AG04449 (cell line): ENCODE measurements at regions of chr22 and their contacts with region 1.

Region 1: DNA sequence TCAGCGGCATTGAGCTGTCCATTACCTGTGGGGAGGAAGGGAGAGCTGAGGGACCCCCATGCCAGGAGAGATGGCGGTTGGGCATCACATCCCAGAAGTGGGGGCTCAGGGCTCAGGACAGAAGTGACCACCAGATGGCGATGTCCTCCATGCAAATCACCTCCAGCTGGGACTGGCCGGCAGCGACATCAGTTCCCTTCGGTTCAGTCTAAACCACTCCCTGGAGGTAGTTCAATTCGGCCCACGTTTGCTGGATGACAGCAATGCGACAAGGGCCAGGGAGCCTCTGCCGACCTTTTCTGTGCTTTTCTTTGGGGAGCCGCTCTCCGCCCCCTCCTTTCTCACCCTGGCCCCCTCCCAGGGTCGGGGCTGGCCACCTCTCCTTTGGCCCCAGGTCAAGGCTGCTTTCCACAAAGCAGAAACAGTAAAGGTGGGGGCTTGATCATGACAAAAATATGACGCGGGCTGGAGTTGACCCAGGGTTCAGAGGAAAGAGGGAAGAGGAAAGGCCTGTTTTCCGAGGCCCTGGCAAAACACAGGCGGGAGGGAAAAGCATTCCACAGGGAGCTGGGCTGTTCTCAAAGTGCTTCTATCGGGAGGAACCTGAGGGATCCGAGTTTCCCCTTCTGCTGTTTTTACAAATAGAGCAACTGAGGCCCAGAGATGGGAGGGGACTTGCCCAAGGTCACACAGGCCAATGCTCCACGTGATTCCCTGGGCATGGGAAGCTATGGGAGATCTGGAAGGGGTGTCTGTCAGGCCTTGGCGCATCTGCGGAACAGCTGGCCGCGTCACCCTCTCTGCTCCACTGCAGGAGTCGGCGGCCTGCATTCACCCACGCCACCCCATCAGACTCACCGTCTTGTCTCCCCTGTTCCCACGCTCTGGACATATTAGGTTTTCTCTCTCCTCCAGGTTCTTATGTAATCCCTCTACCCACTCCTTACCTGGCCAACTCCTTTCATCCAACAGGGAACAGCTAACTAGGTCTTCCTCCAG is 54.7 kb downstream of the FBXO7 start:
- DNase-seq: peak; percentile 45
- H3K4me3 ChIP-seq: no peak overlapping the region
- CTCF ChIP-seq: peak; percentile 89

Region 2: DNA sequence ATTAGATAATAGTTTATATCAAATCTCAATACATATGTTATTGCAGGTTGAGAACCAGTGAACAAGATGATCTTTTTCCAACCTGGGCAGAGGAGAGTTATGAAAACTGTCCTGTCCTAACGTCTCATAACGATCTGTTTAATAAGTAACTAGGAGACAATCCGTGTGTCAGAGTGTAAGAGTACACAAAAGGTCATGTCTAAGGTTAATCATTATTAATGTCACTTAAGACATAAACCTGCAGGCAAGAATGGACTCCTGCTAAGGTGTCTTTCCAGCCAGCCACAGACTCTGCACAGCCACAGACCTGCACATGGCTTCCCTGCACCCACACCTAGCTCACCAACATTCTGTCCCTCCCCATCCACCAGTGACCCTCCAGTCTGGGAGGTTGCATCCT is 284.2 kb before region 1 on chr22:
- CTCF ChIA-PET with region 1: no interaction called
- POLR2A ChIA-PET with region 1: no interaction called
- DNase-seq: no peak
- H3K4me3 ChIP-seq: no peak overlapping the region
- CTCF ChIP-seq: no peak

Region 3: DNA sequence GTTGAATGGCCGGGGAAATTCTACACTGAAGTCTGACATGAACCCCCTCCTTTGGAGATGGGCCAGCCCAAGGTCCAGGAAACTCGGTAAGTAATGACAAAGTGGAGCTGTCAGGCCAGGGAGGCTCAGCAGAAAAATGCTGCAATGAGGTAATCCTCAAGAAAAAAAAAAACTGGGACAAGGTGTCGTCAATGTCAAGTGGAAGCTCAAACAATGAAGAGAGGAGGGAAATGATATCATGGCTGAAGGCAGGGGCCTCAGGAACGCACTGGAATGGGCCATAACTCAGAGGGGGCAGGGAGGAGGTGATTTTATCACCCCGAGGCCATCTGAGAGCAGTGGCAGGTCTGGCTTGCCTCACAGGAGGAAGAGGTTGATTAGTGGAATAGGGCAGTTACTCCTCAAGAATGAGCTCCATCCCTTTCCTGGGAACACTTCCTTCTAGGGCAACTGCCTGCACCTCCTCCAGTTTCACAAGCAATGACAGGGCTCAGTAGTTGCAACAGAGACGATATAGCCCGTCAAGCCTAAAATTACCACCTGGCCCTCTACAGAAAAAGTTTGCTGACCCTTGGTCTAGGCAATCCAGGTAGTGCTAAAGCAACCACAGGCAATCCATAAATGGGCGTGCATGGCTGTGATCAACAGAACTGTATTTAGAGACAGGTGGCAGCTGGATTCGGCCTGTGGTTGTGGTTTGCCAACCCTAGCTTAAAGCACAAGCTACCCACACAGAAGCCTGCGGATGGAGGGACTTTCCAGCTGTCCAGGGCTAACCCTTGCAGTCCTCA is 10.5 kb after region 1 on chr22:
- CTCF ChIA-PET with region 1: interaction called, 13 read pairs
- POLR2A ChIA-PET with region 1: no interaction called
- DNase-seq: no peak
- H3K4me3 ChIP-seq: no peak overlapping the region
- CTCF ChIP-seq: no peak

Region 4: GRCh38 chr22:32810561-32811004 is 281.3 kb after region 1 on chr22:
- CTCF ChIA-PET with region 1: interaction called, 501 read pairs
- POLR2A ChIA-PET with region 1: interaction called, 96 read pairs
- DNase-seq: no peak
- H3K4me3 ChIP-seq: no peak overlapping the region
- CTCF ChIP-seq: no peak

Region 5: DNA sequence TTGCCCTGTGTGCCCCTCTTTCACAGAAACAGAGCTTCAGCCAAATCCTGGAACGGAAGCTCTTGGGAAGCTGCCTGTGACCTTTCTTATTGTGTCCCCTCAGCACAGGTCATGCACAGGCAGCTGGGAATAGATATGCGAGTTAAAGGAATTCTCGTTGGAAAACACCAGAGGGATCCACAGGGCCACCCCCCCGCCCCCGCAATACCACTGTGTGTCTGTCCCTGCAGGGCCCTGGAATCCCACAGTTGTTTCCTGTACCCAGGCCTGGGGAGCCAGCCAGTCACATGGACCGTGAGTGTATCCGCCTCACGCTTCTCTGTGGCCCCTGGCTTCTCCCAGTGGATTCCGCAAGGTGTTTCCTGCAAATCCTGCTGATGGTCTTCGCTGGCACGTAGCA is 301.2 kb after region 1 on chr22:
- CTCF ChIA-PET with region 1: interaction called, 73 read pairs
- POLR2A ChIA-PET with region 1: no interaction called
- DNase-seq: no peak
- H3K4me3 ChIP-seq: no peak overlapping the region
- CTCF ChIP-seq: no peak

Region 6: DNA sequence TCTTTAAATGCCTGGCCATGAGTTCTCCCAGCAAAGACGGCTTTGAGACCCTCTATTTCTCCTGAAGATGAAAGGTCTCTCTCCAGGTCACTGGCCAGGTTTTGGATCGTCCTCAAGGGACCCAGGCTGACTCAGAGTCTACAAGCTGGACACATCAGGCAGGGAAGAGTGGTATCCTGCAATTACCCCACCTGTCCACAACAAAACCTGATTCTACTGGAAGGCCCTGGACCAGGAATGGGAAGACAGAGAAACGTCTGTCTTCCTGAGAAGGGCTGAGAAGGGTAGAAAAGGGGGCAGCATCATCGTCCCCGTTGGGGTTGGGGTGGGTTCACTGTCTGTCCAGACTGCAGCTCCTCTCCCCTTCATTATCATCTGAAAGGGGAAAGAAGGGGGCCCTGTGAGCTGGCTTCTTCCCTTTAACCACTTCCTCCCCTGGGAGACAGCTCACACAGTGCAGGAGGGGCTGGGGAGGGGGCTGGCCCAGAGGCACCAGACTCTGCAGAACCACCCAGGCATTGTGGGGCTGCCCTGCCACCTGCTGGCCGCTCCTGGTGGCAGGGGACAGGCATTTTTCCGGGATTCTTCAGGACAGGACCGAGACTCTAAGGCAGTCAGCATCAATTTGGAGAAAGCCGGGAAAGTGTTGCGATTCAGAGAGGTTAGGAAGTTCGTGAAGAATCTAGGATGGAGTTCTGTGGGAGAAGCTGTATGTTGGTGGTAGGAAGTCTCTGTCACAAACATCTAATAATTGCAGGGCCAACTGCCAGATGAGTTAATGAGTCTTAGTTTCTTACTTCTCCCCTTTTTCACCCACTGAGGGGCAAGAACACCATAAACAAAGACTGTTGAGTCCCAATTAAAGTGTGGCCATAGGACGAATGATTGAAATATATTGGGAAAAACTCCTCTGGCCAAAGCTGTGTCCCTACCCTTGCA is 471.3 kb after region 1 on chr22:
- CTCF ChIA-PET with region 1: interaction called, 202 read pairs
- POLR2A ChIA-PET with region 1: no interaction called
- DNase-seq: no peak
- H3K4me3 ChIP-seq: no peak overlapping the region
- CTCF ChIP-seq: peak; percentile 96

Region 7: GRCh38 chr22:33049119-33049729 is 519.9 kb after region 1 on chr22:
- CTCF ChIA-PET with region 1: interaction called, 10 read pairs
- POLR2A ChIA-PET with region 1: no interaction called
- DNase-seq: no peak
- H3K4me3 ChIP-seq: no peak overlapping the region
- CTCF ChIP-seq: peak; percentile 89